MCF 10A (cell line): ENCODE measurements at regions of chr11 and their contacts with region 1.

Region 1: GRCh38 chr11:94128746-94129511 is at the start of gene PANX1:
- DNase-seq: peak; percentile 82
- H3K4me3 Mint-ChIP-seq: no peak within 1 kb of the TSS
- H3K27ac Mint-ChIP-seq: no peak within 1 kb of the TSS
- H3K4me1 Mint-ChIP-seq: peaks cover 16% of the 10 kb centered on the region
- H3K27me3 Mint-ChIP-seq: no peaks in the 10 kb centered on the region
- CTCF ChIP-seq: no peak
- total RNA-seq, gene PANX1: 26.1 and 30.1 TPM in 2 replicates

Region 2: DNA sequence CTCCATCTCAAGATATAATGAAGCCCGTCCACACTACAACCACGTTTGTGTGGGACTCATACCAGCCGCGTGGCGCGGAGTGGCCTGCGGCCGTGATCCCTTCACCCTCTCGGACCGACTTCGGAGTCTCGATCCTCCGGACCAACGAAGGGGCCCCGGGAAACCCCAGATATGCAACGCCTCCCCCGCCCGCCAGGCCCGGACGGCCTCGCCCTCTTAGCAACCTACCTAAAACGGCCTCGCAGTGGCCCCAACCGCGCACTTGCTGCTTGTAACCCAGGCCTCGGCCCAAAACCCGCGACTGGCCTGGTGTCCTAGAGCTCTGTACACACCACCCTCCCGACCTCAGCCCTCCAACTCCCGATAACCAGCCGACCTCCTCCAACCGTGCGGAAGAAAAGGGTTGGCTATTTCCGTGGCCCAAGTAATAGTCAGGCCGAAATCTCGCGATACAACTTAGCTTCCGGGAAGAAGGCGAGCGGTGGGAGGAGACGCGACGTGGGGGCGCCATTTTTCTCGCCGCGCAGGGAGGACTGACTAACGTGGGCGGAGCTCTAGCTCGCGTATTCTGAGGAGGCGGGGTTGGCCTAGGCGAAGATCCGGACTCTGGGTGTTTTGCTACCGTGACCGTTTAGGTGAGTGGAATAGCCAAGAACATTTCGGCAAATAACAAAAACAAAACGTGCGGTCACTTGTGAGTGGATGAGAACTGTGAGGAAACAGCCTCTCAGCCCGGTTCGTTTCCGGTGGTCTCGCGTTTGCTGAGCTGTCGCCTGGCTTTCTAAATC is 387.6 kb before region 1 on chr11 and contains the starts of genes C11orf54 and TAF1D:
- CTCF ChIA-PET with region 1: no interaction called
- POLR2A ChIA-PET with region 1: interaction called, 36 read pairs
- intact Hi-C with region 1: no loop called
- DNase-seq: peak; percentile 99
- H3K4me3 Mint-ChIP-seq: peak within 1 kb of the TSS; percentile 98
- H3K27ac Mint-ChIP-seq: peak within 1 kb of the TSS; percentile 99
- H3K4me1 Mint-ChIP-seq: peaks cover 37% of the 10 kb centered on the region
- H3K27me3 Mint-ChIP-seq: no peaks in the 10 kb centered on the region
- CTCF ChIP-seq: no peak
- total RNA-seq, gene C11orf54: 13.8 and 23.1 TPM in 2 replicates
- total RNA-seq, gene TAF1D: 165 and 212 TPM in 2 replicates

Region 3: GRCh38 chr11:94107363-94107762 is 21.6 kb before region 1 on chr11:
- CTCF ChIA-PET with region 1: interaction called, 9 read pairs
- POLR2A ChIA-PET with region 1: interaction called, 30 read pairs
- intact Hi-C with region 1: no loop called
- DNase-seq: peak; percentile 42
- H3K4me3 Mint-ChIP-seq: no peak overlapping the region
- H3K27ac Mint-ChIP-seq: no peak overlapping the region
- H3K4me1 Mint-ChIP-seq: no peaks in the 10 kb centered on the region
- H3K27me3 Mint-ChIP-seq: no peaks in the 10 kb centered on the region
- CTCF ChIP-seq: peak; percentile 39

Region 4: GRCh38 chr11:94117871-94118270 is 11.1 kb before region 1 on chr11:
- CTCF ChIA-PET with region 1: interaction called, 9 read pairs
- POLR2A ChIA-PET with region 1: interaction called, 30 read pairs
- intact Hi-C with region 1: no loop called
- DNase-seq: peak; percentile 22
- H3K4me3 Mint-ChIP-seq: no peak overlapping the region
- H3K27ac Mint-ChIP-seq: no peak overlapping the region
- H3K4me1 Mint-ChIP-seq: peaks cover 36% of the 10 kb centered on the region
- H3K27me3 Mint-ChIP-seq: no peaks in the 10 kb centered on the region
- CTCF ChIP-seq: no peak

Region 5: GRCh38 chr11:94171693-94172440 is 42.9 kb after region 1 on chr11:
- CTCF ChIA-PET with region 1: interaction called, 8 read pairs
- POLR2A ChIA-PET with region 1: interaction called, 12 read pairs
- intact Hi-C with region 1: no loop called
- DNase-seq: peak; percentile 65
- H3K4me3 Mint-ChIP-seq: no peak overlapping the region
- H3K27ac Mint-ChIP-seq: no peak overlapping the region
- H3K4me1 Mint-ChIP-seq: peaks cover 12% of the 10 kb centered on the region
- H3K27me3 Mint-ChIP-seq: no peaks in the 10 kb centered on the region
- CTCF ChIP-seq: peak; percentile 79